Cardiac septum (tissue), 1 donor: ENCODE measurements at regions of chr1 and their contacts with region 1.

Region 1: GRCh38 chr1:61343734-61344420 is 261.5 kb downstream of the NFIA start:
- DNase-seq: no peak

Region 2: DNA sequence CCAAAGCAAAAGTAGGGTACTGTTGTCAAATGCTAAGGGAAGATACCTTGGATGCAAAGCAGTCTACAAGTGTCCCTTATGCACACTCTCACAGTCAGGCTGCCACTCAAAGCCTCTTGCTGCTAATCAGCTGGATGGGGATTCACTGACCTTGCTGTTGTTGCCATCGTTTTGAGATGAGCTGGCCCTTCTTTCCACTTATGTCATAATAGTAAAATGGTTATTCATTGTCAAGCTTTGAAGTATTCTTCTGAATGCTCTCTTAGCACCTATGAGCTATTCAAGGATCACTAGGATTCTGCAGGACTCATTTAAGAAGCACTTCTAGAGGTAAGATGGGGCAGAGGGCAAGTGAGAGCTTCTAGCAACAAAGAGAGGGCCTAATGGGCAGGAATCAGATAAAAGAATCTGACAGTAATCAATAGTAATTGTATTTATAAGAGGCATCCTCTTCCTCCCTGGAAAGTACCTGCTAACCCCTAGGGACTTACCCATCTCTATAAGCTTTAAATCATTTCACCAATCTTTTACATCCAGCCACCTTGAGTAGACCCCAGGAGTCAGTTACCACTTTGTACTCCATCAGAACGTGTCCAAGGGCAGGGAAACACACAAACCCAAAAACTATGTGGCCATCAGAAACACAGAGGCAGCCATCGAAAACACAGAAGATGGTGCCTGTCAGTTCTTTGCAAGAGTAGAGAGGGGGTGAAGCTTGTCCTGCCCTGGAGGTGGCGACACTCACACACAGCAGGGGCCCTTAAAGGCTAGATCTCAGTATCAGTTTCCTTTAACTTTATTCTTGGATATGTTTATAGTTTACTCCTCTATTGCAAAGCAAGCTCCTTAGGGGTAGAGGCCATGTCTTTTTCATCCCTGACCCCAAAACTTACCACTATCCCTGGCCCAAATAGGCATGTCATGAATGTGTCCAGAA is 365.2 kb before region 1 on chr1:
- intact Hi-C with region 1: loop called (anchors 10 kb)
- DNase-seq: no peak

Region 3: DNA sequence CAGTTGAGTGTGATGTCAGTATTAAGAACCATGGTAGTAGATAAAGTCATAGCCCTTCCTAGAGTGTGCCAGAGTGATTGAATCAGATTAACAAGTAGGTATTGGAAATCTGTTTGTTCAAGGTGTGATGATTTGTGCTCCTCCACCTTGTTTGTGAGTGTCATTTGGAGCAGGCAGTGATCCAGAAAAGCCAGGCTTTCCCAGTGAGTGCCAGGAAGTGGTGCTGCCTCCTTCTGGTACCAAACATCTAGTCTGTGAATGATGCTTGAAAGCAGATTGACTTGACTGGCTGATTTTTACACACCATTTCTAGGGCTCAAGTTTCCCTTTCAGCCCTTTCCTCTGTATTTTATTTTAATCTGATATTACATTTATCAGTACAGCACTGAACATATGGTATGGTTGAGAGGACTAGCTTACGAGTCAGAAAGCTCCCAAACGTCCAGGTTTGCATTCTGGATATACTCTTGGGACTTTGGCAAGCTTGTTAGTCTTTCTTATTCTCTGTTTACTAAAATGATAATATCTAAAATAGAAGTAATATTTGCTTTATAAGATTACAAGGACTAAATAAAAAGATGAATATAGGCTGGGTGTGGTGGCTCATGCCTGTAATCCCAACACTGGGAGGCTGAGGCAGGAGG is 499.1 kb after region 1 on chr1:
- intact Hi-C with region 1: loop called (anchors 10 kb)
- DNase-seq: no peak